Calu3 (cell line): ENCODE measurements at regions of chr3 and their contacts with region 1.

Region 1: GRCh38 chr3:157979022-157979421 is 127.2 kb downstream of the SHOX2 start:
- DNase-seq: no peak
- H3K4me3 Mint-ChIP-seq: no peak overlapping the region
- H3K27ac Mint-ChIP-seq: no peak overlapping the region
- H3K4me1 Mint-ChIP-seq: no peaks in the 10 kb centered on the region
- H3K27me3 Mint-ChIP-seq: no peaks in the 10 kb centered on the region
- CTCF ChIP-seq: no peak

Region 2: GRCh38 chr3:157754446-157754845 is 224.6 kb before region 1 on chr3:
- CTCF ChIA-PET with region 1: no interaction called
- intact Hi-C with region 1: loop called (anchors 5 kb)
- DNase-seq: no peak
- H3K4me3 Mint-ChIP-seq: no peak overlapping the region
- H3K27ac Mint-ChIP-seq: no peak overlapping the region
- H3K4me1 Mint-ChIP-seq: no peaks in the 10 kb centered on the region
- H3K27me3 Mint-ChIP-seq: peaks cover 20% of the 10 kb centered on the region
- CTCF ChIP-seq: no peak

Region 3: GRCh38 chr3:157961665-157962064 is 17.4 kb before region 1 on chr3:
- CTCF ChIA-PET with region 1: no interaction called
- intact Hi-C with region 1: no loop called
- DNase-seq: no peak
- H3K4me3 Mint-ChIP-seq: no peak overlapping the region
- H3K27ac Mint-ChIP-seq: no peak overlapping the region
- H3K4me1 Mint-ChIP-seq: no peaks in the 10 kb centered on the region
- H3K27me3 Mint-ChIP-seq: no peaks in the 10 kb centered on the region
- CTCF ChIP-seq: no peak

Region 4: GRCh38 chr3:158185711-158186110 is 206.7 kb after region 1 on chr3:
- CTCF ChIA-PET with region 1: no interaction called
- intact Hi-C with region 1: no loop called
- DNase-seq: no peak
- H3K4me3 Mint-ChIP-seq: no peak overlapping the region
- H3K27ac Mint-ChIP-seq: no peak overlapping the region
- H3K4me1 Mint-ChIP-seq: no peaks in the 10 kb centered on the region
- H3K27me3 Mint-ChIP-seq: no peaks in the 10 kb centered on the region
- CTCF ChIP-seq: no peak